RWPE1 (cell line): ENCODE measurements at regions of chr22 and their contacts with region 1.

Region 1: GRCh38 chr22:46006379-46007002 is 29.5 kb upstream of the WNT7B start:
- DNase-seq: peak; percentile 77
- H3K27ac ChIP-seq: peak overlapping the region; percentile 100
- CTCF ChIP-seq: peak; percentile 89

Region 2: GRCh38 chr22:45863981-45864751 is 142.3 kb before region 1 on chr22:
- CTCF ChIA-PET with region 1: no interaction called
- POLR2A ChIA-PET with region 1: no interaction called
- DNase-seq: peak; percentile 44
- H3K27ac ChIP-seq: peak overlapping the region; percentile 48
- CTCF ChIP-seq: peak; percentile 90

Region 3: DNA sequence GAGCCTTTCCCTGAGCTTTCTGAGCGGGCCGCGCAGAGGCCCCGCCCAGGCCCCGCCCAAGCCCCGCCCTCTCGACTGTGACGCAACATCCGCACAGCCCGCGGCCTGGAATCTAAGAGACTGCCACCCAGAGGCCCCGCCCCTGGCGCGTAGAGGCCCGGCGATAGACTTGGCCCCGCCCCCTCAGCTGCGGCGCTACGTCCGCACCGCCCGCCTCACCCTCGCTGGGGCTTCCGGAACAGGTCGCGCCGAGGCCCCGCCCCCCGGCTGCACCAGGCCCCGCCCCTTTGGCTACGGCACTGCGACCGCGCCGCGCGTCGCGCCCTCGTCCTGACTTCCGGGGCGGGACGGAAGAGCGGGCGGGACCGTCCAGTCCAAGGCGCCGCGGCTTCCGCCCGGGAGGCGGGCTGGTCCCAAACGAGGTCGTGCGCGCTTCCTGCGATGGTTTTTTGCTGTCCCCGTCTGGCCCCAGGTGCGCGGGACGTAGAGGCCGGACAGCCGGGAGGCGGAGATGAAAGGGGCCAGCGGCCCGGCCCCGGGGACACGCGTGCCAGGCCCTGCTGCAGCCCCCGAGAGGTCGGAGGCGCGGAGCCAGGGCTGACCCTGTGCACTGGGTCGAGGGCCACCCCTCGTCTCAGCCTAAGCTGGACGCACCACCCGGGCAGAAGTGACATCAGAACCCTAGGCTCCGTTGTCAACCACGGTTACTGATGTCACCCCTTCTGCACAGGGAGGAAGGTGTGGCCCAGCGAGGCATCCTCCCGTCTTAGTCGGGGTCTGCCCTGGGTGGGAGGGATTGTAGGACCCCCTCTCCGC is 29.5 kb after region 1 on chr22:
- CTCF ChIA-PET with region 1: interaction called, 11 read pairs
- POLR2A ChIA-PET with region 1: interaction called, 11 read pairs
- DNase-seq: peak; percentile 96
- H3K27ac ChIP-seq: peak overlapping the region; percentile 95
- CTCF ChIP-seq: no peak

Region 4: GRCh38 chr22:46070803-46071450 is 64.4 kb after region 1 on chr22:
- CTCF ChIA-PET with region 1: interaction called, 9 read pairs
- POLR2A ChIA-PET with region 1: interaction called, 12 read pairs
- DNase-seq: no peak
- H3K27ac ChIP-seq: peak overlapping the region; percentile 100
- CTCF ChIP-seq: no peak

Region 5: DNA sequence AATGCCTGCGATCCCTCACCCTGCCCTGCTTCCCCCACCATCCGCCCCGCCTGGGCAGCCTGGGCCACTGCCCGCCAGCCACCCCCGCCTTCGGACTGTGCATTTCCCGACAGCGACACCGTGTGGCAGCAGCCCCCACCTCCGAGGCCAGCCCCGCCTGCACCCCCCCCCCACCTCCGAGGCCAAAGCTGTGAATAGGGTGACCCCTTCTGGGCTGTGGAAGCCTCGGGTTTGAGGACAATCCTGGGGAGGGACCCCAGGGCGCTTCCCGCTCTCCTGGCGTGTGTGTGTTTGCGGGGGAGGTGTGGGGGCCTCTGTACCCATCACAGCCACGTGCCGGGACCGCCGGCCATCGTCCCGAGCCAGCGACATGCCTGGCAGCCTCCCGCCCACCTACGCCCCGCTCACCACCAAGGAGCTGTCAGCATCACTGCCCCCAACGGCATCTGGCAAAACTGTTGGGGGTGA is 110.0 kb after region 1 on chr22:
- CTCF ChIA-PET with region 1: interaction called, 21 read pairs
- POLR2A ChIA-PET with region 1: no interaction called
- DNase-seq: peak; percentile 85
- H3K27ac ChIP-seq: peak overlapping the region; percentile 99
- CTCF ChIP-seq: peak; percentile 93